ENCODE measurements at regions of chr2 and their contacts with region 1.

Region 1: GRCh38 chr2:47402805-47403608 is at the start of gene MSH2:
- DNase-seq: peak; percentile 67
- ATAC-seq: peak; percentile 97
- H3K4me3 ChIP-seq: peak within 1 kb of the TSS; percentile 76 to 85
- H3K27ac ChIP-seq: peak within 1 kb of the TSS; percentile 84
- H3K4me1 ChIP-seq: no peaks in the 10 kb centered on the region; the same call in 1 of the 2 replicates
- H3K27me3 ChIP-seq: no peaks in the 10 kb centered on the region
- CTCF ChIP-seq: no peak
- total RNA-seq, gene MSH2: 72.2 TPM

Region 2: DNA sequence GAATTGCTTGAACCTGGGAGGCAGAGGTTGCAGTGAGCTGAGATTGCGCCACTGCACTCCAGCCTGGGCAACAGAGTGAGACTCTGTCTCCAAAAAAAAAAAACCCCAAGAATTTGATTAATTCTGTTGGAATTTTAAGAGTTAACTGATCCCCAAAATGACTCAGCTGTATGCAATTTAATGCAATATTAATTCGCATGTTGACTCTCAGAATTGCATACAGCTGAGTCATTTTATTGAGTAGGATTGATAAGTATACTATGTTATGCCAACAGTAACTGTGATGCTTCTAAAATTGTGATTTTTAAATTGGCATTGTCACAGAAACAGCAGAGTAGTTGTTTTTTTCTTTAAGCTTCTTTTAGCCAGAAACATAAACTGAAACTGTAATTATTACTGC is 19.6 kb after region 1 on chr2:
- CTCF ChIA-PET with region 1: no interaction called
- POLR2A ChIA-PET with region 1: interaction called, 15 read pairs
- in situ Hi-C with region 1: no loop called
- intact Hi-C with region 1: no loop called
- DNase-seq: no peak
- ATAC-seq: peak; percentile 80
- H3K4me3 ChIP-seq: no peak overlapping the region
- H3K27ac ChIP-seq: no peak overlapping the region; the same call in 1 of the 2 replicates
- H3K4me1 ChIP-seq: peaks cover 16% of the 10 kb centered on the region
- H3K27me3 ChIP-seq: no peaks in the 10 kb centered on the region
- CTCF ChIP-seq: no peak

Region 3: DNA sequence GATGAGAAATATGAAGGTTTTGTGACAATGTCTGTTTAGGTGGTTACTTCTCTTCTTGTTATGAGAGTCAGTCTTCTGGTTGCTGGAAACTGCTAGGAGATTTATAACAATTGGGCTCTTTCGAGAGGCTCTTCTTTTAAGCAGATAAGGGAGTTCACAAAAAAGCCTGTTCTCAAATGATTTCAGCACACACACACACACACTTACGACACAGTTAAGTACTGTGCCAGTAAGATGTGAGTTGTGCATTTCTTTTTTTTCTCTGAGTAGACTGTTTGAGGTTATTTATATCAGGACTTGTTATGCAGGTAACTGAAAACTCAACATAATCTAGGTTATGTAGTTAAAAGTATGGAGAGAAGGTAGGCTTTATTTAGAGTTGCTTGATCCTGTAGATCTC is 49.8 kb after region 1 on chr2:
- CTCF ChIA-PET with region 1: no interaction called
- POLR2A ChIA-PET with region 1: no interaction called
- in situ Hi-C with region 1: no loop called
- intact Hi-C with region 1: no loop called
- DNase-seq: no peak
- ATAC-seq: no peak
- H3K4me3 ChIP-seq: no peak overlapping the region
- H3K27ac ChIP-seq: no peak overlapping the region
- H3K4me1 ChIP-seq: no peaks in the 10 kb centered on the region
- H3K27me3 ChIP-seq: no peaks in the 10 kb centered on the region
- CTCF ChIP-seq: no peak

Region 4: DNA sequence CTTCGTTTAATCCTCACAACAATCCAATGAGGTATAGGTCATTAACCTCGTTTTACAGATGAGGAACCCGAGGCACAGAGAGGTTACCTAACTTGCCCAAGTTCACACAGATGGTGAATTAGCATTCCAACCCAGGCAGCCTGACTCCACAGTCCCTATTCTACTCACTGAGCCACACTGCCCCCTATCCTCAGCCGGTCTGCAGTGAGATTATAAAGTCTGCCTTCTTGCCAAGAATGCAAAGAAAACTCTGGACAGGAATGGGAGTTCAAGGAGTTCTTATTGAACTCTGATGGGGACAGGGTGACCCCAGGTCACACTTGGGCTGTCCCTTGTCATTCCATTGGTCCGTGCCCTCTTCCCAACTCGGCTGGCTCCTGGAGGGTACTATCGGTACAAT is 261.8 kb after region 1 on chr2:
- CTCF ChIA-PET with region 1: no interaction called
- POLR2A ChIA-PET with region 1: no interaction called
- in situ Hi-C with region 1: no loop called
- intact Hi-C with region 1: no loop called
- DNase-seq: no peak
- ATAC-seq: peak; percentile 63; the same call in 1 of the 2 replicates
- H3K4me3 ChIP-seq: no peak overlapping the region
- H3K27ac ChIP-seq: no peak overlapping the region
- H3K4me1 ChIP-seq: no peaks in the 10 kb centered on the region
- H3K27me3 ChIP-seq: no peaks in the 10 kb centered on the region
- CTCF ChIP-seq: peak; percentile 52; the same call in 1 of the 2 replicates